Esophagus squamous epithelium (tissue), 5 donors: ENCODE measurements at regions of chr6 and their contacts with region 1.

Region 1: GRCh38 chr6:30533460-30534294 is 22.6 kb downstream of the GNL1 start:
- DNase-seq: no peak
- H3K4me3 ChIP-seq: no peak overlapping the region
- H3K27ac ChIP-seq: no peak overlapping the region
- H3K4me1 ChIP-seq: peaks cover 0 to 10% (median 4%) of the 10 kb centered on the region in 3 donors
- H3K27me3 ChIP-seq: no peaks in the 10 kb centered on the region
- CTCF ChIP-seq: no peak
- POLR2A ChIP-seq: no peak

Region 2: GRCh38 chr6:30489081-30490025 is 44.3 kb before region 1 on chr6 and contains the start of gene HLA-E:
- intact Hi-C with region 1: loop called (anchors 5 kb)
- DNase-seq: peak; percentile 86
- H3K4me3 ChIP-seq: peak within 1 kb of the TSS; percentile 76 to 100 (median 88)
- H3K27ac ChIP-seq: peak within 1 kb of the TSS; percentile 95 to 100 (median 98)
- H3K4me1 ChIP-seq: peaks cover 25 to 55% (median 37%) of the 10 kb centered on the region in 3 donors
- H3K27me3 ChIP-seq: no peaks in the 10 kb centered on the region
- CTCF ChIP-seq: peak in 1 of 6 experiments; percentile 13
- POLR2A ChIP-seq: peak; percentile 62 to 100 (median 88)
- total RNA-seq, gene HLA-E: 263 to 597 (median 356) TPM

Region 3: GRCh38 chr6:30707281-30707872 is 173.7 kb after region 1 on chr6:
- intact Hi-C with region 1: no loop called
- DNase-seq: no peak
- H3K4me3 ChIP-seq: no peak overlapping the region
- H3K27ac ChIP-seq: no peak overlapping the region
- H3K4me1 ChIP-seq: peaks cover 0 to 12% (median 0%) of the 10 kb centered on the region in 3 donors
- H3K27me3 ChIP-seq: no peaks in the 10 kb centered on the region
- CTCF ChIP-seq: no peak
- POLR2A ChIP-seq: no peak